ENCODE measurements at regions of chr1 and their contacts with region 1.

Region 1: GRCh38 chr1:157803851-157804250 is 16.1 kb downstream of the FCRL1 start:
- DNase-seq: no peak
- H3K4me3 ChIP-seq: no peak overlapping the region
- H3K27ac ChIP-seq: no peak overlapping the region
- H3K4me1 ChIP-seq: no peaks in the 10 kb centered on the region
- H3K27me3 ChIP-seq: no peaks in the 10 kb centered on the region
- CTCF ChIP-seq: no peak
- POLR2A ChIP-seq: no peak

Region 2: DNA sequence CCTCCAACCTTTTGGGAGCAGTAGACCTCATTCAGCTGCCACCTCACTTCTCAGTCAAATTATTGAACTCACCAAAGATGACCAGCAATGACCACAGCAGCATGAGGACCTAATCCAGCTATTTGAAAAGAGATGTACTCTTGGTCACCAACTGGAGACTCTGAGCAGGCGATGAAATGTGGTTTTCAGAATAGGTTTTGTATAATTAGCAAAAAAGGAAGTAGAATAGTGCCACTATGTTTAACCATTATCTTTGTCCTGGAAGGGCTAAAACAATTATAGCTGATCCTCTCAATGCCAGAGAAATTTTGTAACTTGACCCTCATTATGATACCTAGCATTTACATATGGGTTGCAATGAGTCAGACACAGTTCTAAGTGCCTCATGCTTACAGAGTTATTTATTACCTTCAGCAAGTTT is 26.9 kb before region 1 on chr1 and contains the start of gene FCRL2:
- intact Hi-C with region 1: loop called (anchors 2 kb)
- DNase-seq: no peak
- H3K4me3 ChIP-seq: no peak within 1 kb of the TSS
- H3K27ac ChIP-seq: no peak within 1 kb of the TSS
- H3K4me1 ChIP-seq: no peaks in the 10 kb centered on the region
- H3K27me3 ChIP-seq: no peaks in the 10 kb centered on the region
- CTCF ChIP-seq: no peak
- POLR2A ChIP-seq: no peak
- total RNA-seq, gene FCRL2: under 0.01 to 0.66 (median 0.59) TPM

Region 3: GRCh38 chr1:158117854-158118704 is 314.2 kb after region 1 on chr1:
- intact Hi-C with region 1: no loop called
- DNase-seq: no peak
- H3K4me3 ChIP-seq: peak overlapping the region in 2 of 3 donors; percentile 23
- H3K27ac ChIP-seq: no peak overlapping the region
- H3K4me1 ChIP-seq: no peaks in the 10 kb centered on the region
- H3K27me3 ChIP-seq: peaks cover 0 to 12% of the 10 kb centered on the region in 2 donors
- CTCF ChIP-seq: peak in 2 of 3 donors; percentile 14 to 29
- POLR2A ChIP-seq: no peak

Measured in breast epithelium (tissue), 4 donors.